Activated T-helper 1 cell treated with anti-CD3 and anti-CD28 coated beads, Interleukin-12 subunit alpha, Interleukin-12 subunit beta, Interleukin-2, Interleukin-4 antibody, amounts not matched to agents 30 ng/mL and 10 ng/mL and 1 ng/mL, durations not matched to agents 14 hours and 24 hours and 36 hours (primary cell): ENCODE measurements at regions of chr11 and their contacts with region 1.

Region 1: DNA sequence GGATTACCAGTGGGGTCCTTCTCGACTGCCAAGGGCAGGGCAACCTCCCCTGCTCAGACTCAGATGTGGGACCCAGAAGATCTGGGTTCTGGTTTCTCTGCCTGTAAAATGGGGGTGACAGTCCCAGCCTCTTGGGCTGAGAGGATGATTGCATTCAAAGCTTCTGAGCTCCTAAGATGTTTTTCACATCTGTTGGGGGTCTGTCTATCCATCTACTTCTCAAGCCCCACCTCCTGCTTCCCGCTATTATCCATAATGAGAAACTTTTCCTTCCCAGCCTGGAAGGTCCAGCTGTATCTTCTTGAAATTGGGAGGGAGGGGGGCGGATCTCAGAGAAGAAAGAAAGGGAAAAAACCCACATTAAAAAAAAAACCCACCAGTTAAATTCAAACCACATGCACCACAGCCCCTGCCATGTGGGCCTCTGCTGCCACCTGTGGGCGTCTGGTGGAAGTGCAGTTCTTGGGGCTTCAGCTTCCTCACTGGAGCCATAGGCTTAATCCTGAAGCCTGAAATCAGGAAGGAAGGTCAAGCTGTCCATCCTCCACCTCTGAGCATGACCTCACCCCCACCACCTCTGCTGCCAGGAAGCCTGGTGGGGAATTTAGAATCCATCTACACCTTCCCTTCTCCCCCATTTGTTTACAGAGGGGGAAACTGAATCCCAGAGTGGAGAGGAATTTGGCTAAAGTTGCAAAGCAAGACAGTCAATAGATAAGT is 27.3 kb downstream of the ARHGEF17 start:
- DNase-seq: peak; percentile 58
- H3K4me3 Mint-ChIP-seq: no peak overlapping the region
- H3K27ac Mint-ChIP-seq: no peak overlapping the region
- H3K4me1 Mint-ChIP-seq: no peaks in the 10 kb centered on the region
- H3K27me3 Mint-ChIP-seq: peaks cover 12% of the 10 kb centered on the region

Region 2: DNA sequence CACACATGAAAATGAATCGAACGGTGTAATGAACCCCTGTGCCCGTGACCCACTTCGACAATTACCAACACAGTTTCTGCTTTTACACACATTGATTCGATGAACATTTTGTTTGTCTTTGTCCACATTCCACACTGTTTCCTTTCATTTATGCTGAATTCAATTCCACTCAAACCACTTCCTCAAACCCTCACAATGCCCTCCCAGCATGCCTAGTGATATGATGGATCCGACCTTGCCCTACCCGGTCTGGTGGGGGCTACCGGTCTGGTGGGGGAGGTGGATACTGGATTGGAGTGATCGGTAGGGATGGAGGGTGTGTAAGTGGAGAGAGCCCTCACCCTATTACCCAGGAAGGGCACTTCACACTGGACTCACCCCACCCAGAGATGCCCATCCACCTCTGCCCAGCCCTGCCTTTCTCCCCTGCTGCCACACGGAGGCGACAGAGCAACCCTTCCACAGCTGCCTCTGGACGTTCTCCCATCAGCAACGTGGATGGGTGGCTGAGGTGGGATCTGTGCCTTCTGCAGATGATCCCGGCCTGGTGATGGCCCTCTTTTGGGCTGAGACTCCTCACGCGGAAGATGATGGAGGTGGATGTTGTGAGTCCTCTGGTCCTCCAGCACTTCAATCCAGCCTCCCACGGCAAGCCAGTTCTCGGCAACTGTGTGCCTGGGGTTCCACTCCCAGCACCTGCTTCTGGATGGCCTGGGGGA is 150.3 kb before region 1 on chr11:
- intact Hi-C with region 1: loop called (anchors 1 kb)
- DNase-seq: peak; percentile 40
- H3K4me3 Mint-ChIP-seq: no peak overlapping the region
- H3K27ac Mint-ChIP-seq: no peak overlapping the region
- H3K4me1 Mint-ChIP-seq: peaks cover 13% of the 10 kb centered on the region
- H3K27me3 Mint-ChIP-seq: peaks cover 21% of the 10 kb centered on the region

Region 3: DNA sequence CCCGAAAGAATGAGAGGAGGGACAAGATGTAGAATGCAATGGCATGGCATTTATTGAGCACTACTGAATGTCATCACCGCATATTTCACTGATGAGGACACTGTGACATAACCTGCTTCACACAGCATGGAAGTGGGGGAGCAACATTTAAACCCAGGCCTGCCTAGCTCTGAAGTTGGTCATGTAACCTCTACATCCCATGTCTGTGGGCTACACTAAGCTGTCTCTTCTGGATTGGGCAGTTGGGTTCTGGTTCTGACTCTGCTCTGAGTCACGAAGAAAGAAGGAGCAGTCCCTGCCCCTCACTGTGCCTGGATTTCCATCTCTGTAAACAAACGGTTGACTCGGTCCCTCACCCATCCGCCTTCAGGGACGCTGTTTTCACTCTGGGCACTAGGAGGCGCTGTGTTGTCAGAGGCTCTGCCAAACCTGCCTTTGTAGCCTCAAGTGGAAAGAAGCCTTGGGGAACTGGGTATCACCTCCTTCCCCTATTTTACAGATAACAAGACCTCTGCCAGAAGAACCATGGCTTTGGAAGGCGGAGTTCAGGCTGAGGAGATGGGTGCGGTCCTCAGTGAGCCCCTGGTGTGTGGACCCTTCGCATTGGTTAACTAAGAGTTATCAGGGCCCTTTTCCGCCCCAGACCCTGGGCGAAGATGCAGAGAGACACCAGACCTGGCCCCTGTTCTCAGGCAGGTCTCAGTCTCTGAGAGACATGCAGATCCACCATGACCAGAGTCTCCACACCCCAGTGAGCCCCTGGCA is 40.0 kb before region 1 on chr11:
- intact Hi-C with region 1: loop called (anchors 1 kb)
- DNase-seq: peak; percentile 68
- H3K4me3 Mint-ChIP-seq: no peak overlapping the region
- H3K27ac Mint-ChIP-seq: no peak overlapping the region
- H3K4me1 Mint-ChIP-seq: peaks cover 6% of the 10 kb centered on the region
- H3K27me3 Mint-ChIP-seq: peaks cover 13% of the 10 kb centered on the region

Region 4: GRCh38 chr11:73307323-73308002 is 27.9 kb before region 1 on chr11:
- intact Hi-C with region 1: loop called (anchors 1 kb)
- DNase-seq: peak; percentile 78
- H3K4me3 Mint-ChIP-seq: peak overlapping the region; percentile 87
- H3K27ac Mint-ChIP-seq: no peak overlapping the region
- H3K4me1 Mint-ChIP-seq: peaks cover 12% of the 10 kb centered on the region
- H3K27me3 Mint-ChIP-seq: peaks cover 39% of the 10 kb centered on the region

Region 5: DNA sequence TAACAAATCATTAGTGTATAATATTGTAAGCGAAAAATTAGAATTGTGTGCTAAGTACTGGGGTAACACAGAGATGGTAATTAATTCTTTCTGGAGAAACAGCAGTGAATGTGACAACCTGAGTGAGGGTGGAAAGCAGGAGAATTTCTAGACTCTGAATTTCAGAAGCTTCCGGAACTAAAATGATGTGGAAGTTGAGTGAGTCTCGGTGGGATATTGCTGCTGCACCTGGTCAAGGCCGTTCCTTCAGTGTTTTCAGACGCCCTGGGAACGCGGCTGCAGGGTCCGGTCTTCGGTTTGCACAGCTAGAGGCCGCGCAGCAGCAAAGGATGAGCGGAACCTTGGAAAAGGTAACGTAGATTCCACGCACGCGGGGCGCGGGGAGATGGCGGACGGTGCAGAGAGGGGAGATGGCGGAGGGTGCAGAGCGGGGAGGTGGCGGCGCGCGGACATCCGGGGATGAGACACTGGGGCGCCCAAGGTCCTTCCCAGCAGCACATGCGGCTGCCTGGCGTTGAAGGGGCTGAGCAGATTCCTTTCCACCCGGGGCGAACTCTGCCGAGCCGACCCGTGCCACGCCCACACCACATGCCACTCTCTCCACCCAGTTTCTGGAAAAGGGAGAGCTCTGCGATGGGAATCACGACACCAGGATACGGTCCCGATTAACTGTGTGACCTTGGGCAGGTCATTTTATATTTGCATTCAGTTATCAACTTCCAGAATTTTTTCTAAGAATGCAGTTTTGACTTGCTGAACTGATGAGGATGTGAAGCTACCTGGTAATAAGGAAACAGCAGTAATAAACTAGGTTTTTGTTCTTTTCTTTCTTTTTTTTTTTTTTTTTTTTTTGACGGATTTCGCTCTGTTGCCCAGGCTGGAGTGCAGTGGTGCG is 452.5 kb after region 1 on chr11 and contains the start of gene MRPL48:
- intact Hi-C with region 1: no loop called
- DNase-seq: peak; percentile 84
- H3K4me3 Mint-ChIP-seq: peak within 1 kb of the TSS; percentile 98
- H3K27ac Mint-ChIP-seq: peak within 1 kb of the TSS; percentile 94
- H3K4me1 Mint-ChIP-seq: peaks cover 25% of the 10 kb centered on the region
- H3K27me3 Mint-ChIP-seq: no peaks in the 10 kb centered on the region
- total RNA-seq, gene MRPL48: 55.0 and 56.3 TPM in 2 replicates